Breast epithelium (tissue), 4 donors: ENCODE measurements at regions of chr2 and their contacts with region 1.

Region 1: GRCh38 chr2:144572977-144573376 is 53.1 kb upstream of the ZEB2 start:
- DNase-seq: no peak
- H3K4me3 ChIP-seq: no peak overlapping the region
- H3K27ac ChIP-seq: no peak overlapping the region
- H3K4me1 ChIP-seq: no peaks in the 10 kb centered on the region
- H3K27me3 ChIP-seq: no peaks in the 10 kb centered on the region
- CTCF ChIP-seq: no peak
- POLR2A ChIP-seq: no peak

Region 2: DNA sequence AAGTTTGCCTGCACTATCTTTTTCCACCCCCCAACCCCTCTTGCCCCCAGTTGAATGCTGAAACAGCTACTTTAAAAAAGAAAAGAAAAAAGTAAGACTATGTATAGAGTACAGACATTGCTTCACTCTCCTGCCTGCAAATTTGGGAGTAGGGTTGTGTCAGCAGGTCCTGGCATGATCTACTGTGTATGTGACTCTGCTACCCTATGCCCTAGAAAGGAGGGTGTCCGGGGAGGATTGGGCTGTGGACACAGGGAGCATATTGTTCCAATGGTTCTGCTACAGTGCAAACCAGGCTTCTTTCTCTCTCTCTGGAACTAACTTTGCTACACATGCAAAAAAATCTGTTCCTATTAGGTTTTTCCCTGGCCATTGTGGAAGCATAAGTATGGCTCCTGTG is 43.1 kb before region 1 on chr2:
- intact Hi-C with region 1: loop called (anchors 2 kb)
- DNase-seq: no peak
- H3K4me3 ChIP-seq: no peak overlapping the region
- H3K27ac ChIP-seq: no peak overlapping the region
- H3K4me1 ChIP-seq: no peaks in the 10 kb centered on the region
- H3K27me3 ChIP-seq: no peaks in the 10 kb centered on the region
- CTCF ChIP-seq: no peak
- POLR2A ChIP-seq: no peak

Region 3: GRCh38 chr2:145268931-145269330 is 696.0 kb after region 1 on chr2:
- intact Hi-C with region 1: no loop called
- DNase-seq: no peak
- H3K4me3 ChIP-seq: no peak overlapping the region
- H3K27ac ChIP-seq: no peak overlapping the region
- H3K4me1 ChIP-seq: no peaks in the 10 kb centered on the region
- H3K27me3 ChIP-seq: no peaks in the 10 kb centered on the region
- CTCF ChIP-seq: no peak
- POLR2A ChIP-seq: no peak